ENCODE measurements at regions of chr6 and their contacts with region 1.

Region 1: GRCh38 chr6:43021270-43022047 is at the start of gene RRP36:
- DNase-seq: no peak
- H3K4me3 ChIP-seq: peak within 1 kb of the TSS; percentile 93
- H3K27ac ChIP-seq: peak within 1 kb of the TSS; percentile 85
- H3K27me3 ChIP-seq: no peaks in the 10 kb centered on the region
- CTCF ChIP-seq: no peak
- polyA plus RNA-seq, gene RRP36: 50.3 and 54.0 TPM in 2 replicates

Region 2: GRCh38 chr6:42989923-42990322 is 31.5 kb before region 1 on chr6:
- CTCF ChIA-PET with region 1: no interaction called
- POLR2A ChIA-PET with region 1: no interaction called
- DNase-seq: no peak
- H3K4me3 ChIP-seq: no peak overlapping the region
- H3K27ac ChIP-seq: no peak overlapping the region
- H3K27me3 ChIP-seq: no peaks in the 10 kb centered on the region
- CTCF ChIP-seq: no peak

Region 3: GRCh38 chr6:43033496-43034189 is 12.2 kb after region 1 on chr6:
- CTCF ChIA-PET with region 1: interaction called, 6 read pairs
- POLR2A ChIA-PET with region 1: interaction called, 12 read pairs
- DNase-seq: no peak
- H3K4me3 ChIP-seq: no peak overlapping the region
- H3K27ac ChIP-seq: no peak overlapping the region
- H3K27me3 ChIP-seq: no peaks in the 10 kb centered on the region
- CTCF ChIP-seq: no peak

Measured in AG04450 (cell line).